Mammary epithelial cell (primary cell): ENCODE measurements at regions of chr16 and their contacts with region 1.

Region 1: DNA sequence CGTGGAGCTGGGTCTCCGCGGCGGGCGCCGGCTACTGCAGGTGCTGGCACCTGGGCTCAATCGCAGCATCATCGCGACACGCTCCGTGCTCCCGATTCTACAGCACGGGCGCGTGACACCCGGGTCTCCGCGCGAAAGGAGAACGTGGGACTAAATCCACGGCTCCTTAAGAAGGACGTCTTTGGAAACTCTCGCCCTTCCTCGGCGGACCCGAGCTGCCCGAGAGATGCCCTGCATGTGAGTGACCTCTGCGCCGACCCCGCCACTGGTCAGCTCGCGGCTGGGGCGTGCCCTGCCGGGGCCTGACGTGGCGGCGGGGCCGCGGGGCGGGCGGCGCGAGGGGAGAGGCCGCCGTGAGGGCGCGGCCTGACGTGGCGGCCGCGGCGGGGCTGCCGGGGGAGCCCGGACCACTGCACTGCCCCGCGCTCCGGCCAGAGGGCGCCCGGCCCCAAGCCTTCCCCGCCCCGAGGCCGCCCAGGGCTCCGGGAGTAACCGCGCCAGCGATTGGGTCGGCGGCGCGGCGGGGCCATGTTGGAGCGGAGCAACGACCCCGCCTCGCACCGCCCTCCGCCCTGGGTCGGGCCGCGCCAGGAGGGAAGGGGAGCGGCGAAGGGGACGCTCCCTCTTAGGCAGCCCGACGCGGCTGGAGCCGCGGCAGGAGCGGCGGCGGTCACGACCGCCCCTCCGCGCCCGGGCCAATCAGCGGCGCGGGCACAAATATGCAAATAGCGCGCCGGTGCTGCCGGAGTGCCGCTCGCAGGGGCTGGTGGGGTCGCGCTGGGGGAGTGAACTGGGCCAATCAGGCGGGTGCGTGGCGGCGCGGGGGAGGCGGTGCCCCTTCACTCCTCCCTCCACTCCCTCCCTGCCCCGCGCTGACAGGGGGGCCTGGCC is 75.6 kb downstream of the CHD9 start:
- DNase-seq: peak; percentile 94
- H3K4me3 ChIP-seq: peak overlapping the region; percentile 60 to 83 (median 68)
- H3K27ac ChIP-seq: peak overlapping the region; percentile 78
- H3K4me1 ChIP-seq: peaks cover 15% of the 10 kb centered on the region
- H3K27me3 ChIP-seq: no peaks in the 10 kb centered on the region
- CTCF ChIP-seq: peak; percentile 15 to 49

Region 2: GRCh38 chr16:52709306-52709705 is 421.1 kb before region 1 on chr16:
- CTCF ChIA-PET with region 1: no interaction called
- dilution Hi-C with region 1: no loop called
- in situ Hi-C with region 1: no loop called
- intact Hi-C with region 1: no loop called
- DNase-seq: no peak
- H3K4me3 ChIP-seq: no peak overlapping the region
- H3K27ac ChIP-seq: no peak overlapping the region
- H3K4me1 ChIP-seq: no peaks in the 10 kb centered on the region
- H3K27me3 ChIP-seq: no peaks in the 10 kb centered on the region
- CTCF ChIP-seq: no peak

Region 3: DNA sequence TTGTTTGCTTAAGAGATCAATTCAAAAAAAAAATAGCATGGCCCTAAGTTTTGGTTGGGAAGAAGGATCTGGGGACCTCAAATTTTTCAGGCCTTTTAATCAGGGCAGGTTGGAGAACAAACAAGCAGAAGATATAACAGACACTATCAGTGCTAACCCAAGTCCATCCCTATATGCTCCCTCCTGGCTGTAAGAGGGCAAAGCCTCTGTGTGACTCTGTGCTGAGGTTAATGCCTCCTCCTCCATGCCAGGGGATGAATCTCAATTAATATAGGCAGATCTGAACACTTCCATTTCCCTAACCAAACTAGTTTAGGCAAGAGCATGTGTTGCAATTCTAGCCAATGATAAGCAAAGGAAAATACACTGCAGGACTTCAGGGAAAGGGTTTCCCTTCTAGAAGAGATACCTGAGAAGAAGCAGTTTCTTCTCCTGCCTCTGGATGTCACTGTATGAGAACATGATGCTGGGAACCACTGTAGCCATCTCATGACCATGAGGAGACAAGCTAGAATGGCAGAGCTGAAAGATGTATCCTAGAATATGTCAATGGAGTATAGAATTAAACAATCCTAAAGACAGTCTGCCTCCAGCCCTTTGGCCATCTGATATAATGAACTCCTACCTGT is 153.8 kb before region 1 on chr16:
- CTCF ChIA-PET with region 1: interaction called, 21 read pairs
- dilution Hi-C with region 1: no loop called
- in situ Hi-C with region 1: no loop called
- intact Hi-C with region 1: no loop called
- DNase-seq: peak; percentile 52
- H3K4me3 ChIP-seq: no peak overlapping the region
- H3K27ac ChIP-seq: no peak overlapping the region
- H3K4me1 ChIP-seq: no peaks in the 10 kb centered on the region
- H3K27me3 ChIP-seq: no peaks in the 10 kb centered on the region
- CTCF ChIP-seq: peak; percentile 59 to 75

Region 4: GRCh38 chr16:53099318-53100130 is 30.9 kb before region 1 on chr16:
- CTCF ChIA-PET with region 1: no interaction called
- dilution Hi-C with region 1: no loop called
- in situ Hi-C with region 1: no loop called
- intact Hi-C with region 1: loop called (anchors 1 kb)
- DNase-seq: peak; percentile 98
- H3K4me3 ChIP-seq: peak overlapping the region; percentile 24 to 53 (median 36)
- H3K27ac ChIP-seq: peak overlapping the region; percentile 91
- H3K4me1 ChIP-seq: peaks cover 26% of the 10 kb centered on the region
- H3K27me3 ChIP-seq: no peaks in the 10 kb centered on the region
- CTCF ChIP-seq: peak in 1 of 2 donors; percentile 3

Region 5: DNA sequence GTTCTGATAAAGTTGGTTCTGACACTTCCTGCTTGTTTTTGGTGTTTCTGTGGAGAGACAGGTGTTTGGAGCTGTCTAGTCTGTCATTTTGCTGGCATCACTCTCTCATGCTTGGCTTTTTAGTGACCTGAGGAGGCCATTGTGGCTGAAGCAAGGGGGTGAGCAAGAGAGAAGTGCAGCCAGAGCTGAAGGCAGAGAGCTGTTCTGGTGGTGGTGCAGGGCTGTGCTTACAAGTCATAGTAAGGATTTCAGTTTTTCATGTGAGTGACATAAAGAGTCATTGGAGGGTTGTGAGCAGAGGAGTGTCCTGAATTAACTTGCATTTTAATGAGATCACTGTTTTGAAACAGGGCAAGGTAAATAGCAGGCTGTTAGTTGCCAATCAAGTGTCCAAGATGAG is 21.9 kb after region 1 on chr16:
- CTCF ChIA-PET with region 1: no interaction called
- dilution Hi-C with region 1: no loop called
- in situ Hi-C with region 1: no loop called
- intact Hi-C with region 1: no loop called
- DNase-seq: no peak
- H3K4me3 ChIP-seq: no peak overlapping the region
- H3K27ac ChIP-seq: no peak overlapping the region
- H3K4me1 ChIP-seq: peaks cover 5% of the 10 kb centered on the region
- H3K27me3 ChIP-seq: no peaks in the 10 kb centered on the region
- CTCF ChIP-seq: no peak

Region 6: DNA sequence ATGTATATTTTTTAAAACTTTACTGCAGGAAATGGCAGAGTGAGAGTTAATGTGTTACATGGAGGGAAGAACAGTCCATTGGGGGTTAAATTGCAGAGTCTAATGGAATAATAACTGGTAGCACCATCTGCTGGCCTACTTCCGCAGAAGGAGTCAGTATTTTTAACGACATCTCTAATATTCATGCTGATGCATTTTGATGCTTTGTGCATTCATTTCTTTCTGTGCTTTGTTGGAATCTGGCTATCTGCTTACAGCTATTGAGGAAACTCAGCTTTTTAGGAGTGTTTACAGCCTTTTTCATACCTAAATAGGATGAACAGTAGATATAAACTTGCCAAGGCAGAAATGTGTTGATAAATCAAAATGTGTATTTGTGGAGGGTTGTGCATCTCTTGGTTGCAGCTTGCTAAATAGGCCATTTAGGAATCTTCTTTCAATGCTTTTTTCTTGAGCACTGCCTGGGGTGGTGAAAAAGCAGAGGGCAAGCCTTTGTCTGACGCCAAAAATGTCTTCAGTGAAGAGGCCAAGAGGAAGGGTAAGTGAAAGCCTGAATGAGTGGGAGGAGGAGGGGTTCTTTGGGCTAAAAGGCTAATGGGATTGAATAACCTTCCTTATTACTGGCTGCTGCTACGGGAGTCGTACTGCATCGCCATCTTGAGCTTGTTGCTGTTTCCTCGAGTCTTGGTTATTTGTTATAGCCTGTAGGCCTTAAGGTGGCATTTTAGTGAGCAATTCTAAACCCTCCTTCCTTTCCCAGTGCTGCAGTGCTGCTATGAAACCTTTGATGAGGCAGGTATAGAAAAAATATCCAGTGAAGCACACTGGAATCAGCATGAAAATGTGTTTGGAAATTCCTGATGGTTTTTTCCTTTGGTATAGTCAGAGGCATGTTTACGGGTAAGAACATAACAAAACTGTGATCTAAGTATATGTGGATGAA is 77.7 kb after region 1 on chr16:
- CTCF ChIA-PET with region 1: interaction called, 3 read pairs
- dilution Hi-C with region 1: no loop called
- in situ Hi-C with region 1: no loop called
- intact Hi-C with region 1: loop called (anchors 1 kb)
- DNase-seq: peak; percentile 82
- H3K4me3 ChIP-seq: peak overlapping the region; percentile 57 to 79 (median 63)
- H3K27ac ChIP-seq: peak overlapping the region; percentile 90
- H3K4me1 ChIP-seq: peaks cover 9% of the 10 kb centered on the region
- H3K27me3 ChIP-seq: no peaks in the 10 kb centered on the region
- CTCF ChIP-seq: peak; percentile 55 to 60

Region 7: GRCh38 chr16:53503270-53503923 is 373.0 kb after region 1 on chr16:
- CTCF ChIA-PET with region 1: no interaction called
- dilution Hi-C with region 1: no loop called
- in situ Hi-C with region 1: no loop called
- intact Hi-C with region 1: loop called (anchors 10 kb)
- DNase-seq: peak; percentile 100
- H3K4me3 ChIP-seq: peak overlapping the region; percentile 74 to 90 (median 79)
- H3K27ac ChIP-seq: peak overlapping the region; percentile 42
- H3K4me1 ChIP-seq: peaks cover 24% of the 10 kb centered on the region
- H3K27me3 ChIP-seq: no peaks in the 10 kb centered on the region
- CTCF ChIP-seq: no peak